ENCODE measurements at regions of chr11 and their contacts with region 1.

Region 1: GRCh38 chr11:43504316-43504950 is 145.7 kb downstream of the TTC17 start:
- DNase-seq: peak; percentile 42
- H3K4me3 Mint-ChIP-seq: no peak overlapping the region
- H3K27ac Mint-ChIP-seq: no peak overlapping the region
- H3K4me1 Mint-ChIP-seq: peaks cover 21% of the 10 kb centered on the region
- H3K27me3 Mint-ChIP-seq: no peaks in the 10 kb centered on the region
- CTCF ChIP-seq: peak; percentile 41

Region 2: GRCh38 chr11:43493431-43493830 is 11.0 kb before region 1 on chr11:
- CTCF ChIA-PET with region 1: interaction called, 11 read pairs
- POLR2A ChIA-PET with region 1: interaction called, 3 read pairs
- intact Hi-C with region 1: no loop called
- DNase-seq: no peak
- H3K4me3 Mint-ChIP-seq: no peak overlapping the region
- H3K27ac Mint-ChIP-seq: no peak overlapping the region
- H3K4me1 Mint-ChIP-seq: no peaks in the 10 kb centered on the region
- H3K27me3 Mint-ChIP-seq: no peaks in the 10 kb centered on the region
- CTCF ChIP-seq: no peak

Region 3: DNA sequence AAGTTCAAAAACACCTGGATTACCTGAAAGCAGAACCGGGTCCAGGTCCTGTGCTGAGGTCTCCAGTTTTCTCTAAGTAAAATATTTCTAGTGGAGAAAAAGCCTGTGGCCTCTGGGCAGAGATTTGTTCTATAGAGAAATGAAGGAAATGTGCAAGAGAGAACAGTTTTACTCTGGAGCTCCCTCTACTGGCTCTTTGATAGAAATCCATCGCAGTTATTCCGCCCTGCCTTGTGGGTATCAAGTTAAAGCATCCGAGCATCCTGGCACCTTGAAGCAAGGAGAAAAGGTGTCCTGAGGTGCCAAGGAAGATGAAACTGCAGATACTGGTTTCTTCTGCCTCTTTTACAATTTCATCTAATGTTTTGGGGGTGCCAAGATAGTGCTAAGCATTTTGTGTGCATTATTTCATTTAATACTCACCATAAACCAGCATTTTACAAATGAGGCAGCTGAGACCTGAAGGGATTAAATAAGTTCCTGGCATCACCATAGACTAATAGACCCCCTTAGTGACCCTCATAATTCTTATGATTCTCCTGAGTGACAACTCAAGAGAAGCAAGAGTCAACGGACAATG is 63.1 kb after region 1 on chr11:
- CTCF ChIA-PET with region 1: interaction called, 41 read pairs
- POLR2A ChIA-PET with region 1: no interaction called
- intact Hi-C with region 1: loop called (anchors 1 kb)
- DNase-seq: peak; percentile 70
- H3K4me3 Mint-ChIP-seq: no peak overlapping the region
- H3K27ac Mint-ChIP-seq: no peak overlapping the region
- H3K4me1 Mint-ChIP-seq: no peaks in the 10 kb centered on the region
- H3K27me3 Mint-ChIP-seq: peaks cover 59% of the 10 kb centered on the region
- CTCF ChIP-seq: peak; percentile 63

Region 4: DNA sequence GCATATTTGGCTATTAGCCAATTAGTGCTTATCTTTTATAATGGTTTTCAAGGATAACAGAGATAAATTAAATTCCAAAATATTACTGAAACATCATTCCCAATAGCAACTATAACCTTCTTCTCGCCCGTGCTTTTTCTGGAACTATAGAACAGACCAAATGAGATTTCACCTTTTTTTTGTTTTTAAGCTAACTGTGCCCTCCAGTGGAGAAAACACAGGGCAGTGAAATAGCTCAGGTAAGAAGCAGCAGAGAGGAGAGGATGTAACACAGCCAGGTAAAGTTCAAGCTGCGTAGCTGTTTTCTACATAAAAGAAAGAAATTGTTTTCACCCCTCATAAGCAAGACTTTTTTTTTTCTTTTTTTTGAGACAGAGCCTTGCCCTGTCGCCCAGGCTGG is 204.3 kb after region 1 on chr11:
- CTCF ChIA-PET with region 1: interaction called, 3 read pairs
- POLR2A ChIA-PET with region 1: no interaction called
- intact Hi-C with region 1: loop called (anchors 5 kb)
- DNase-seq: peak; percentile 14
- H3K4me3 Mint-ChIP-seq: no peak overlapping the region
- H3K27ac Mint-ChIP-seq: no peak overlapping the region
- H3K4me1 Mint-ChIP-seq: no peaks in the 10 kb centered on the region
- H3K27me3 Mint-ChIP-seq: no peaks in the 10 kb centered on the region
- CTCF ChIP-seq: peak; percentile 36

Measured in MCF 10A (cell line).